ENCODE measurements at regions of chr17 and their contacts with region 1.

Region 1: DNA sequence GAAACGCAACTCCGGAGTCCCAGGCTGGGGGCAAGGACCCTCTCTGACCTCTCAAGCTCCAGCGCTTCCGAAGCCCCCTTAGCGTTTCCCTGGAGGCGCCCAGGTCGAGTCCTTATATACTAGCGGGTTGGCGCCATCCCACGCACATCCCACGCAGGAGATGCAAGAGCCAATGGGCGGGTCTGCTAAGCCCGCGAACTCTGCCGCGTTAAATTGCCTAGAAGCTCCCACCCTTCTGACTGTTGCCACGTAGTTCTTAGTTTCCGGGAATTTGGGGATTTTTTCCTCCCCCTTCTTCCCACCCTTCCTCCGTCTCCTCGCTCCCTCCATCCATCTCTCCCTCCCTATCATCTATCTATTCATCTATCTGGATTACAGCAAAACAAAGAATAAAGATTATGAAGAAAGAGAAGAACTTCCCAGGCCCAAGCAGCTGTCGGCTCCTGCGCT is at the start of gene SLFN11:
- DNase-seq: peak; percentile 97
- H3K4me3 ChIP-seq: peak within 1 kb of the TSS; percentile 52 to 67 (median 64)
- H3K27ac ChIP-seq: peak within 1 kb of the TSS; percentile 91 to 95 (median 93)
- H3K4me1 ChIP-seq: peaks cover 0 to 24% (median 0%) of the 10 kb centered on the region in 4 donors
- H3K27me3 ChIP-seq: peaks cover 0 to 24% (median 0%) of the 10 kb centered on the region in 3 donors
- CTCF ChIP-seq: no peak
- EP300 ChIP-seq: peak in 1 of 4 donors; percentile 12
- POLR2A ChIP-seq: peak; percentile 79 to 82
- total RNA-seq, gene SLFN11: 17.8 to 28.0 (median 25.7) TPM

Region 2: DNA sequence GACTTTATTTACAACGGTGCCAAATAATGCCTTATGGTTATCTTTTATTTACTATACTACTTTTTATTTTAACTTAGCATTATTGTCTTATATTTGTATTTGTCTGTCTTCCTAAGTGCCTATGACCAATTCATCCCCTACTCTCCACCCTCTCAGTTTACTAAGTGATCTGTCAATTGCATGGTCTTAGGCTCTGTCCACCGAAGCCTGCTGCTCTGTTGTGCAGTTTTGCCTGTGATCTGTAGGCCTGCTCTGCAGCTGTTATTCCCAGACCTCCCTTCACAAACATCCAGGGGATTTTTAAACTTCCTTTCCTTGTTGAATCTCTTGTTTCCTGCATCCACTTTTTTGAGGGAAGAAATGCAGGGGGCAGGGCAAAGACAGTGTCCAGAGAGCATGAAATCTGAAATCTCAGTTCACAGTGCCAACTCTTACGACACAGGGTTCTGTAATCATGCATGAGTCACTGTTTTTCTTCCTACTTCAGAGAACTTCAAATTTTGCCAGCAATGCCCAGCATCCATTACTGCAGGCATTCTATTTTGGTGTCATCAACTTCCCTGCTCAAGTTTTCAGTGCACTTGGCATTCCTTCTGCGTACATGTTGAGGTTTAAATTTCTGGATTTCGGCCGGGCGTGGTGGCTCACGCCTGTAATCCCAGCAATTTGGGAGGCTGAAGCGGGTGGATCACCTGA is 119.3 kb before region 1 on chr17:
- intact Hi-C with region 1: loop called (anchors 5 kb)
- DNase-seq: peak; percentile 89
- H3K4me3 ChIP-seq: no peak overlapping the region
- H3K27ac ChIP-seq: peak overlapping the region; percentile 75 to 85 (median 82)
- H3K4me1 ChIP-seq: peaks cover 0 to 61% (median 47%) of the 10 kb centered on the region in 4 donors
- H3K27me3 ChIP-seq: no peaks in the 10 kb centered on the region
- CTCF ChIP-seq: no peak
- EP300 ChIP-seq: peak in 1 of 4 donors; percentile 68
- POLR2A ChIP-seq: no peak

Region 3: GRCh38 chr17:35432176-35433074 is 58.9 kb after region 1 on chr17 and contains the start of gene SLFN12:
- intact Hi-C with region 1: loop called (anchors 2 kb)
- DNase-seq: peak; percentile 87
- H3K4me3 ChIP-seq: peak within 1 kb of the TSS; percentile 43 to 62 (median 54)
- H3K27ac ChIP-seq: peak within 1 kb of the TSS; percentile 80 to 87 (median 85)
- H3K4me1 ChIP-seq: peaks cover 0 to 26% (median 20%) of the 10 kb centered on the region in 4 donors
- H3K27me3 ChIP-seq: no peaks in the 10 kb centered on the region
- CTCF ChIP-seq: no peak
- EP300 ChIP-seq: no peak
- POLR2A ChIP-seq: no peak
- total RNA-seq, gene SLFN12: 6.4 to 19.9 (median 10.2) TPM

Region 4: GRCh38 chr17:35448214-35448898 is 74.8 kb after region 1 on chr17 and contains the start of gene SLFN13:
- intact Hi-C with region 1: loop called (anchors 5 kb)
- DNase-seq: peak; percentile 90
- H3K4me3 ChIP-seq: peak within 1 kb of the TSS; percentile 42 to 62 (median 52)
- H3K27ac ChIP-seq: peak within 1 kb of the TSS; percentile 61 to 79 (median 74)
- H3K4me1 ChIP-seq: peaks cover 0 to 24% (median 17%) of the 10 kb centered on the region in 4 donors
- H3K27me3 ChIP-seq: peaks cover 0 to 28% (median 5%) of the 10 kb centered on the region in 3 donors
- CTCF ChIP-seq: no peak
- EP300 ChIP-seq: no peak
- POLR2A ChIP-seq: peak; percentile 19 to 29
- total RNA-seq, gene SLFN13: 11.1 to 19.9 (median 17.8) TPM

Region 5: GRCh38 chr17:35537601-35538141 is 164.1 kb after region 1 on chr17 and contains the start of gene SLFN12L:
- intact Hi-C with region 1: loop called (anchors 5 kb)
- DNase-seq: no peak
- H3K4me3 ChIP-seq: no peak within 1 kb of the TSS
- H3K27ac ChIP-seq: peak within 1 kb of the TSS in 2 of 4 donors; percentile 16 to 39
- H3K4me1 ChIP-seq: peaks cover 0 to 22% (median 0%) of the 10 kb centered on the region in 4 donors
- H3K27me3 ChIP-seq: no peaks in the 10 kb centered on the region
- CTCF ChIP-seq: no peak
- EP300 ChIP-seq: no peak
- POLR2A ChIP-seq: no peak
- total RNA-seq, gene SLFN12L: 0.27 to 1.2 (median 0.63) TPM